Right lobe of liver (tissue), 6 donors: ENCODE measurements at regions of chr1 and their contacts with region 1.

Region 1: GRCh38 chr1:216310776-216311175 is 112.5 kb downstream of the USH2A start:
- DNase-seq: peak in 1 of 3 donors; percentile 44
- ATAC-seq: peak; percentile 81 to 90 (median 84)
- H3K4me3 ChIP-seq: no peak overlapping the region
- H3K27ac ChIP-seq: no peak overlapping the region
- H3K4me1 ChIP-seq: no peaks in the 10 kb centered on the region
- H3K27me3 ChIP-seq: no peaks in the 10 kb centered on the region
- CTCF ChIP-seq: peak; percentile 50 to 69 (median 58)
- POLR2A ChIP-seq: no peak

Region 2: GRCh38 chr1:216250861-216251260 is 59.9 kb before region 1 on chr1:
- intact Hi-C with region 1: no loop called
- DNase-seq: no peak
- ATAC-seq: no peak
- H3K4me3 ChIP-seq: no peak overlapping the region
- H3K27ac ChIP-seq: no peak overlapping the region
- H3K4me1 ChIP-seq: no peaks in the 10 kb centered on the region
- H3K27me3 ChIP-seq: no peaks in the 10 kb centered on the region
- CTCF ChIP-seq: no peak
- POLR2A ChIP-seq: no peak

Region 3: DNA sequence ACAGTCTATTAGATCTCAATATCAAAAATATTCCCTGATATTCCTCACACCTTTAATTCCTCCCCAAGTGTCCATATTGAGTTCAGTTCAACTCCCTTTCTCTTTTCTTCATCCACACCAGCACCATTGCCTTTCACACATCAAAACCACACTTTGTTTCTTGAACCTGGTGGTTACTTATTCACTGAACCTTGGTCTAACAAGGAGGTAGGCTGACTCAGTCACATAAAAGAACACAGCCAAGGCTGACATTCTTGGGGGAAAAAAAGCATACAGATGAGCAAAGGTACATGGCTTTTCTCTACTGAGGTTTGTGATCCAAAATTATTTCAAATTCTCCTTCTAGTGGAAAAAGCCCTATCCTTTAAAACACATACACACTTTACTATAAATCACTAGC is 244.2 kb after region 1 on chr1:
- intact Hi-C with region 1: loop called in 1 of 2 experiments (anchors 10 kb)
- DNase-seq: no peak
- ATAC-seq: no peak
- H3K4me3 ChIP-seq: no peak overlapping the region
- H3K27ac ChIP-seq: no peak overlapping the region
- H3K4me1 ChIP-seq: no peaks in the 10 kb centered on the region
- H3K27me3 ChIP-seq: no peaks in the 10 kb centered on the region
- CTCF ChIP-seq: no peak
- POLR2A ChIP-seq: no peak